H1 (cell line): ENCODE measurements at regions of chr7 and their contacts with region 1.

Region 1: DNA sequence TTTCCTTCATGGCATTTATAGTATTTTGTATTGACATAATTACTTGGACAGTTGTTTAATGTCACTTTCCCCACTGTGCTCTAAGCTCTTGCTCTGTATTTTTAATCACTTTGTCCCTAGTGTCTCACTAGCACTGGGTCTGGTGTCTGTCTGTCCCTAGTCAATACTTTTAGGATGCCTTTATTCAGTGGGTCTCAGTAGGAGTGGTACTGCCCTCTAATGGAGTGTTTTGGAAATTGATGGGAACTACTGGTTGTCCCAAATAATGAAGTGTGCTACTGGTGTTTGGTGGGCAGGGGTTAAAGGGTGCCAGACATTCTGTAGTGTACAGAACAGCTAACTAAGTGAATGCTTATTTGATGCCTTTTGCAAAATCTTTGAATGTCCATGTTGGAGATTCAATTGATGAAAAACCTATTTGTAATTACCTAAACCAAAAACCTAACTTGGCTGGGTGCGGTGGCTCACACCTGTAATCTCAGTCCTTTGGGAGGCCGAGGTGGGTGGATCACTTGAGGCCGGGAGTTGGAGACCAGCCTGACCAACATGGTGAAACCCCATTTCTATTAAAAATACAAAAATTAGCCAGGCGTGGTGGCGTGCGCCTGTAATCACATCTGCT is 33.3 kb downstream of the CDK14 start:
- DNase-seq: no peak
- H3K4me3 ChIP-seq: no peak overlapping the region
- H3K27ac ChIP-seq: no peak overlapping the region
- H3K4me1 ChIP-seq: peaks cover 0 to 9% (median 4%) of the 10 kb centered on the region in 4 experiments; a peak in 2 of 7 replicates
- H3K27me3 ChIP-seq: no peaks in the 10 kb centered on the region
- CTCF ChIP-seq: peak in 2 of 3 experiments; percentile 69 to 77; a peak in 3 of 4 replicates
- EP300 ChIP-seq: no peak
- POLR2A ChIP-seq: no peak
- RAD21 ChIP-seq: peak; percentile 82 to 88

Region 2: DNA sequence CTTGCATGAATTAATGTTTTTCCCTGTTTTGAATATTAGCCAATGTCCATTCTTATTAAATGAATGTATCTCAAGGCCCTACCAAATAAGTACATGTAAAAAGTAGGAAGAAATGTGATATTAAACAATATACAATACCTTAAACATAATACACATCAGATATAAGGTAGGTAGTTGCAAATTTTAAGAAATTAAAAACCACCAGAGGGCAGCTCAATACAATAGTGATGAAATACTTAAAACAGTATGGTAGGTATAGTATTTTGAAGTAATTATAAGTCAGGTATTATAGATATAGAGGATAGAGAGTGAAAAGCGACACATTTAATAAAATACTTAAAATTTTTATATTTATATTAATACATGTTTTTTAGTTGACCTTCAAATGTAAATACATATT is 76.9 kb before region 1 on chr7:
- CTCF ChIA-PET with region 1: interaction called, 12 read pairs
- POLR2A ChIA-PET with region 1: no interaction called
- DNase-seq: no peak
- H3K4me3 ChIP-seq: no peak overlapping the region
- H3K27ac ChIP-seq: no peak overlapping the region
- H3K4me1 ChIP-seq: peaks cover 0 to 6% (median 0%) of the 10 kb centered on the region in 4 experiments; a peak in 3 of 7 replicates
- H3K27me3 ChIP-seq: no peaks in the 10 kb centered on the region
- CTCF ChIP-seq: no peak
- EP300 ChIP-seq: no peak
- POLR2A ChIP-seq: no peak
- RAD21 ChIP-seq: no peak; a peak in 1 of 4 replicates

Region 3: DNA sequence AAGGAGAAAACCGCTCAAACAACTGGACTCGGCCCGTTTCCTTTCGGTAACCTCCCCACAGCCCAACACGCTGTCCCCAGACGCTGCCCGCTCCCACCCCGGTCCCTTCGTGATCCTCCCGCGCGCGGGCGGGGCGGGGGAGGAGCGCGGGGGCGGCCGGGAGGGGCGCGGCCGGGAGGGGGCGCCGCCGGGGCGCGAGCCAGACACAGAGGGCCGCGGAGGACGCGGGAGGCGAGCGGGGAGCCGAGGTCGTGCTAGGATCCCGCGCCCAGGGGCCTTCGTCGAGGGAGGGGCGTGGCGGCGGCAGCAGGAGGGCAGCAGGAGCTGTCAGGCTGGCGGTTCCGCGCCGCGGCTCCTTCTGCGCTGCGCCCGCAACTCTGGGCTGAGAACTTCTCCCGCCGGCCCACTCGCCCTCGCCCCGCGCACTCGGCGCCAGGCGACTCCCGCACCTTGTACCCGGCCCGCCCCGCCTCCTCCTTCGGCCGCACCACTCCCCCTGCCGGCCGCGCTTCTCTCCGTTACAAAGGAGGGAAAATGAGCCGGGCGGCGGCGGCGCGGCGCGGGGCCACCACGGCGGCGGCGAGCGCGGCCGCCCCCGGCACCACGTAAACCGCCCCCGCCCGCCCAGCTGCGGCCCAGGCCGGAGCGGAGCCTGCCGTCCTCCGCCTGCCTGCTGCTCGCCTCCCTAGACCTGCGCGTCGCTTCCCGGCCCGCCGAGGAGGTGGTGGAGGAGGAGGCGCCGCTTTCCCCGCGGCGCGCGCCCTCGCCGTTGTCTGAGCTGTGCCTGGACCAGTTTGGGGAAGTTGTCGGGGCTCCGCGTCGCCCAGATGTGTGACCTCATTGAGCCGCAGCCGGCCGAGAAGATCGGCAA is 33.4 kb before region 1 on chr7 and contains the start of gene CDK14:
- CTCF ChIA-PET with region 1: interaction called, 17 read pairs
- POLR2A ChIA-PET with region 1: no interaction called
- DNase-seq: peak in 1 of 2 experiments; percentile 87
- H3K4me3 ChIP-seq: peak within 1 kb of the TSS; percentile 64 to 97 (median 84)
- H3K27ac ChIP-seq: peak within 1 kb of the TSS; percentile 73; the same call in 1 of the 2 replicates
- H3K4me1 ChIP-seq: peaks cover 0 to 8% (median 5%) of the 10 kb centered on the region in 4 experiments; a peak in 5 of 7 replicates
- H3K27me3 ChIP-seq: peaks cover 0 to 10% (median 2%) of the 10 kb centered on the region in 4 experiments; a peak in 4 of 7 replicates
- CTCF ChIP-seq: peak; percentile 31 to 53 (median 49)
- EP300 ChIP-seq: no peak
- POLR2A ChIP-seq: peak; percentile 51 to 55
- RAD21 ChIP-seq: peak in 1 of 2 experiments; percentile 8; a peak in 2 of 4 replicates
- total RNA-seq, gene CDK14: 47.3 and 48.8 TPM in 2 replicates

Region 4: GRCh38 chr7:90603326-90603725 is 26.1 kb before region 1 on chr7:
- CTCF ChIA-PET with region 1: interaction called, 17 read pairs
- POLR2A ChIA-PET with region 1: no interaction called
- DNase-seq: no peak
- H3K4me3 ChIP-seq: no peak overlapping the region
- H3K27ac ChIP-seq: no peak overlapping the region
- H3K4me1 ChIP-seq: 0 out of 7 replicates have a peak, but pooled peaks cover 0 to 3% (median under 1%) of the 10 kb centered on the region in 4 experiments
- H3K27me3 ChIP-seq: no peaks in the 10 kb centered on the region
- CTCF ChIP-seq: no peak
- EP300 ChIP-seq: no peak
- POLR2A ChIP-seq: no peak
- RAD21 ChIP-seq: no peak